Heart right ventricle (tissue), 16 donors: ENCODE measurements at regions of chr14 and their contacts with region 1.

Region 1: GRCh38 chr14:61475316-61475715 is 153.9 kb downstream of the PRKCH start:
- DNase-seq: peak in 1 of 2 donors; percentile 40
- ATAC-seq: no peak
- H3K4me3 ChIP-seq: no peak overlapping the region
- H3K27ac ChIP-seq: peak overlapping the region in 8 of 10 donors; percentile 81 to 97 (median 88)
- H3K4me1 ChIP-seq: peaks cover 26 to 100% (median 85%) of the 10 kb centered on the region in 9 donors
- H3K27me3 ChIP-seq: no peaks in the 10 kb centered on the region
- CTCF ChIP-seq: peak; percentile 44 to 82 (median 75)

Region 2: DNA sequence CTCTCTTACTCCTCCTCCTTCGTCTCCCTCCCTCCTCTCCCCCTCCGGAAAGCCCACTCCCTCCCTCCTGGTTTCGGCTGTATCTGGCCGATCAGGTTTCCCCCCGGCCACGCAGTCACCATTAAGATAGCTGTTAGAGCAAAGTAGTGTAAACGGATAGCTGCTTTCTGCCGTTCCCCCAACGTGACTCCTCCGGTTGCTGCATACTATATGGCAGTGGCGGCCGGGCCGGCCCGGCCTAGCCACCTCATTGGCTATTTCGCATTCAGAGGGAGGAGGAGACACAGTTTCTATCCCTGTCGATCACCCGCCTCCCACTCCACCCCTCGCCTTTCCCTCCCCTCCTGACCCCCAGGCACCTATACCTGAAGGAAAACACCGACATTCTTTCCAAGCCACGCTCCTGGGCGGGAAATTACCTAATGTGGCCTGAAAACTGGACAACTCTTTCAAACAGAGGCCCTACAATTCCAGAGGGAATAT is 751.1 kb before region 1 on chr14 and contains the start of gene SIX4:
- intact Hi-C with region 1: no loop called
- DNase-seq: peak; percentile 41 to 57
- ATAC-seq: peak; percentile 60 to 93 (median 88)
- H3K4me3 ChIP-seq: peak within 1 kb of the TSS; percentile 59 to 80 (median 74)
- H3K27ac ChIP-seq: peak within 1 kb of the TSS in 3 of 10 donors; percentile 21 to 58 (median 54)
- H3K4me1 ChIP-seq: peaks cover 0 to 34% (median 19%) of the 10 kb centered on the region in 9 donors
- H3K27me3 ChIP-seq: peaks cover 0 to 98% (median 67%) of the 10 kb centered on the region in 7 donors
- CTCF ChIP-seq: no peak
- total RNA-seq, gene SIX4: 0.59 to 1.5 (median 0.82) TPM

Region 3: DNA sequence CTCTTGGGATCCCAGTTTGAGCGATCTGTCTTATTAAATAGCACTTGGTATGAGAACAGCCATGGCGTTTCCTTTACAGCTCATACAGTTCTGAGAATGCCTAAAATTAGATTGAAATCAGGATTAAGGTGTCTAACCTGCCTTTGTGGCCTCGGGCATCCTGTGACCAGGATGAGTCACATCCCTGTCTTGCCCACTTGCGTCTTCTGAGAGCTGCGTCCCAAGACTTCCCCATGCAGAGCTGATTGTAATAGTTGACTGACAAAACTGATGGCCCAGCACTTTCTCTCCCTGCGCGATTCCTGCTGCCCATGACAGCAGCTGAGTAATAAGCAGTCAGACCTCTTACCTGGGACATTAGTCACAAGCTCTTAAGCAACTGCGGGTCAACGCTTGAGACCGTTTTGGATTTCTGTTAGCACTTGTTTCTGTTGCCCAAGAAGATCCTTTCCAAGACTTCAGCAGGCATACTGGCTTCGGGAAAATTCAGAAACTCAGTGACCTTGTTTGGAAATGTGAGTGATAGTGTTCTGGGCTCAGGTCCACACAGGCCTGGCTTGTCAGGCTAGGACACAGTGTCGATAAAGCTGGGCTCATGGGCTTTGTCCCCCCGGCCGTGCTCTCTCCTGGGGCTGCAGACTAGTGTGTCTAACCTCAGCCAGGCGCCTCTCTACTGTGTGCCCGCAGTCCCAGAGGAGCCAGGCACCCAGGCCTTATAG is 50.1 kb after region 1 on chr14:
- intact Hi-C with region 1: loop called in 2 of 10 experiments (anchors 5 to 10 kb)
- DNase-seq: peak; percentile 45 to 52
- ATAC-seq: peak; percentile 64 to 91 (median 77)
- H3K4me3 ChIP-seq: no peak overlapping the region
- H3K27ac ChIP-seq: peak overlapping the region; percentile 48 to 92 (median 79)
- H3K4me1 ChIP-seq: peaks cover 15 to 70% (median 52%) of the 10 kb centered on the region in 9 donors
- H3K27me3 ChIP-seq: no peaks in the 10 kb centered on the region
- CTCF ChIP-seq: no peak

Region 4: GRCh38 chr14:61561657-61562276 is 86.5 kb after region 1 on chr14:
- intact Hi-C with region 1: loop called in 5 of 10 experiments (anchors 5 to 10 kb)
- DNase-seq: peak; percentile 41 to 82
- ATAC-seq: peak; percentile 68 to 92 (median 85)
- H3K4me3 ChIP-seq: no peak overlapping the region
- H3K27ac ChIP-seq: peak overlapping the region; percentile 55 to 93 (median 80)
- H3K4me1 ChIP-seq: peaks cover 9 to 72% (median 37%) of the 10 kb centered on the region in 9 donors
- H3K27me3 ChIP-seq: no peaks in the 10 kb centered on the region
- CTCF ChIP-seq: peak in 1 of 9 donors; percentile 11

Region 5: DNA sequence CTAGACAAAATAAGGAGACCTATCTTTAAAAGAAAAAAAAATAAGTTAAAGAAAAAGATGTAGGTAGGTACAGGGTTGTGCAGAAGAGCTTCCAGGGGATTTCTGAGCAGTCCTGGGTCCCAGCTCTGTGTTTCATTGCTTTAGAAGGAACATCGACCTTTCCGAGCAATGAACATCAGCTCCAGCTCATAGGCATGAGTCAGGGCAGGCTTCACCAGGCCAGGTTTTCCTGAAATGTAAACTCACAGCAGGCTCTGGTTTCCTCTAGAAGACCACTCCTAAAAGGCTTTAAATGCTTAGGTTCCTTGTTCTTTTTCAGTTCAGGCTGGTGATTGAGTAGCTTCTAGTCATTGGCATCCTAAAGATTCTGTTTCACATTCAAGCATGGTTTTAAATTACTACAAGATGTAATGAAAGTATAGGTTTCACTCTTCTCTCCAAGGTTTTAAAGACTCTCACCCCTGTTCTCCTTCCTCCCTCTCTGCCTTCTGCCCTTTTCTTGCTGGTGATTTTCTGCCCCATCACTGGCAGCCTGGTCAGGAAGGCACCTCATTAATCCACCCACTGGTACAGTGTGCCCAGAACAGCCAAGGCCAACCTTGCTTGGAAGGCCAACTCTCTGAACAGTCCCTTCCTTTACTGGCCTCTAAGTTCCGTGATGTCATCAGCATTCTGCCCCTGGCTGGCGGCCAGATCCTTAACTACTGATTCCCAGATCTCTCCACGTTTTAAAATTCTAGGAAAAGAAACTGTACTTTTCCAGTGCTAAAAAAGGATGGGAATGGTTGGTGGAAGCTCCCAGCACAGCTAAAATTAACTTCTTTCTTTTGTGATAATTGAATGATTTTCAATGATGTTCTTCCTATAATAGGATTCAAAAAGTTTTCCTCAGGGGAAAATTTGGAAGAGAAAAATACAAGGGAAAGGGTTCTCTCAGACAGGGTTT is 110.6 kb after region 1 on chr14:
- intact Hi-C with region 1: loop called in 2 of 10 experiments (anchors 2 to 5 kb)
- DNase-seq: peak; percentile 76 to 85
- ATAC-seq: peak; percentile 68 to 92 (median 84)
- H3K4me3 ChIP-seq: no peak overlapping the region
- H3K27ac ChIP-seq: peak overlapping the region; percentile 17 to 86 (median 61)
- H3K4me1 ChIP-seq: peaks cover 6 to 79% (median 42%) of the 10 kb centered on the region in 9 donors
- H3K27me3 ChIP-seq: no peaks in the 10 kb centered on the region
- CTCF ChIP-seq: no peak

Region 6: DNA sequence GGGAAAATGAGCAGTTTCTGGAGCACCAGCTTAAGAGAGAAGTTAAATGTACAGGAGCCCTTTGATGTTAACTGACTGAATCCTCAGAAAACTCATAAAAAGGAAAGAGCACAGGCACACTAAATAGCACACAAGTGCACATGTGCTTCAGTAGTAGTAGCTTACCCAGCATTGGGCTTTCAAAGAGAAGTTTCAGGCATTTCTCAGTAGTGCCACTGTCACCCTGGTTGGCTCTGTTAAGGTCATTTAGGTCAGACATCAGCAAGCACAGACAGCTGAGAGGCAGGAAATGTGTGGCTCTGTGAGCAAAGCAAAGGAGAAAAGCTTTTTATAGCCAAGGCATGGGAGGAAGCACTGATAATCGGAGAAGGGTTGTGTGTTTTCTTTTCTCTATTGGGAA is 123.7 kb after region 1 on chr14:
- intact Hi-C with region 1: no loop called
- DNase-seq: peak in 1 of 2 donors; percentile 38
- ATAC-seq: peak; percentile 73 to 93 (median 83)
- H3K4me3 ChIP-seq: no peak overlapping the region
- H3K27ac ChIP-seq: peak overlapping the region in 9 of 10 donors; percentile 2 to 86 (median 51)
- H3K4me1 ChIP-seq: peaks cover 3 to 72% (median 12%) of the 10 kb centered on the region in 9 donors
- H3K27me3 ChIP-seq: no peaks in the 10 kb centered on the region
- CTCF ChIP-seq: no peak

Region 7: GRCh38 chr14:61710853-61711817 is 235.8 kb after region 1 on chr14:
- intact Hi-C with region 1: loop called in 1 of 10 experiments (anchors 10 kb)
- DNase-seq: no peak
- ATAC-seq: peak in 1 of 8 donors; percentile 30
- H3K4me3 ChIP-seq: no peak overlapping the region
- H3K27ac ChIP-seq: no peak overlapping the region
- H3K4me1 ChIP-seq: peaks cover 0 to 80% (median 44%) of the 10 kb centered on the region in 9 donors
- H3K27me3 ChIP-seq: no peaks in the 10 kb centered on the region
- CTCF ChIP-seq: no peak

Region 8: GRCh38 chr14:61750708-61751474 is 275.6 kb after region 1 on chr14:
- intact Hi-C with region 1: loop called in 1 of 10 experiments (anchors 5 kb)
- DNase-seq: peak; percentile 88 to 90
- ATAC-seq: peak; percentile 96 to 98 (median 98)
- H3K4me3 ChIP-seq: peak overlapping the region; percentile 3 to 82 (median 65)
- H3K27ac ChIP-seq: peak overlapping the region; percentile 87 to 97 (median 93)
- H3K4me1 ChIP-seq: peaks cover 0 to 63% (median 36%) of the 10 kb centered on the region in 9 donors
- H3K27me3 ChIP-seq: no peaks in the 10 kb centered on the region
- CTCF ChIP-seq: no peak